ENCODE measurements at regions of chr19 and their contacts with region 1.

Region 1: DNA sequence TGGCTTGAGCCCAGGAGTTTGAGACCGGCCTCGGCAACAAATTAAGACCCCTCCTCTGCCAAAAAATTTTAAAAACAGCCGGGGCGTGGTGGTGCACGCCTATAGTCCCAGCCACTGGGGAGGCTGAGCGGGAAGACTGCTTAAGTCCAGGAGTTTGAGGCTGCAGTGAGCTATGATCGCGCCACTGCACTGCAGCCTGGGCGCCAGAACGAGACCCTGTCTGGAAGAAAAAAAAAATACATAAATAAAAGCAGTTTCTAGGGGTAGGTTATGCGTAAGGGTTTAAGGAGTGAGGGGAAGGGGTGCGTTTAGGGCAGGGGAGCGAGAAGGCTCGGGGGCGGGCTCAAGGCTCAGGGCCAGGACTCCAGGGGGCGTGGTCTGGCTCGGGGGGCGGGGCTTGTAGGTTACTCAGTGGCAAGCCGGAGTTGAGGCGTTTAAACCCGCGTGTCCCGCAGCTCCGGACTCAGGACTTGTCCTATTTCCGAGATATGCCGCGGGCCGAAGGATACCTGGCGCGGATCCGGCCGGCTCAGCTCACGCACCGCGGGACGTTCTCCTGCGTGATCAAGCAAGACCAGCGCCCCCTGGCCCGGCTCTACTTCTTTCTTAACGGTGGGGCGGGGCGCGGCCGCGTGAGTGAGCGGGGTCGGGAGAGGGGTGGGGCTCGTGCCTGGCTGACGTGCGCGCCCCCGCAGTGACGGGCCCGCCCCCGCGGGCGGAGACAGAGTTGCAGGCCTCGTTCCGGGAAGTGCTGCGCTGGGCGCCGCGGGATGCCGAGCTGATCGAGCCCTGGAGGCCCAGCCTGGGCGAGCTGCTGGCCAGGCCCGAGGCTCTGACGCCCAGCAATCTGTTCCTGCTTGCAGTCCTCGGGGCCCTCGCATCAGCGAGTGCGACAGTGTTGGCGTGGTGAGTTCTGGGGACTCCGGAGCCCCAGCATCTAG is 10.7 kb downstream of the SPACA6 start:
- DNase-seq: peak; percentile 97
- H3K4me3 Mint-ChIP-seq: peak overlapping the region; percentile 91
- H3K27ac Mint-ChIP-seq: peak overlapping the region; percentile 92
- H3K4me1 Mint-ChIP-seq: peaks cover 27% of the 10 kb centered on the region
- H3K27me3 Mint-ChIP-seq: peaks cover 3% of the 10 kb centered on the region

Region 2: DNA sequence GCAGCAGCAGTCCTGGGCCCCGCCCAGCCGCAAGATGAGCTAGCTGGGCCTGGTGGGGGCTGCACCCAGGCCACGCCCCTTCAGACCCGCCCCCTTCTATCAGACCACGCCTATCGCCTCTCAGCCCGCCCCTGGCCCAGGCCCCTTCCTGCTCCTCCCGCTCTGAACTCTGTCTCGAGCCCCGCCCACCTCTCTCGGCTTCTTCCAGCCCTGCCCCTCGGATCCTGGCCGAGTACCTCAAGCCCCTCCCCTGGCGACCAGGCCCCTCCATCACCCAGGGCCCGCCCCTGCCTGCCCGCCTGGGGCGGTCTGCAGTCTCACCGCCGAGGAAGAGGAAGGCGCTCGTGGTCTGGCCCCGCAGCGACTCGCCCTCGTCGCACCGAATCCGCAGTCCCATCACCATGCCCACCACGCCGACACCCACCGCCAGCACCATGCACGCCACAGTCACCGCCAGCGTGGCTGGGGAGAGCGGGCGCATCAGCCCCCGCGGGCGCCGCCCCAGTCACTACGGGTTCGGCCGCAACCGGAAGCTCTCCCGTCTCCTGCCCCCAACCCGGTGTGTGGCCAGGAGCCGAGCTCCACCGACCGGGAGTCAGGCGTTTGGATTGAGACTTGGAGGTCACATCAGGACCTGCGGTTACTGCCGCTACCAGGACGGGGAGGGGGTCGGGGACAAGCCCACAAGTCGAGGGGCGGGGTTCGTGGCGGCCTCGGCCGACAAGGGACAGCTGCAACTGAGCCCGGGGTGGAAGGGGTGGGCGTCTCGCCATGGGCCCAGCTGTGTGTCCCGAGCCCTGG is 336.1 kb before region 1 on chr19:
- CTCF ChIA-PET with region 1: no interaction called
- intact Hi-C with region 1: loop called (anchors 1 kb)
- DNase-seq: peak; percentile 99
- H3K4me3 Mint-ChIP-seq: peak overlapping the region; percentile 94
- H3K27ac Mint-ChIP-seq: peak overlapping the region; percentile 95
- H3K4me1 Mint-ChIP-seq: peaks cover 58% of the 10 kb centered on the region
- H3K27me3 Mint-ChIP-seq: no peaks in the 10 kb centered on the region

Region 3: GRCh38 chr19:51690454-51691073 is 13.3 kb before region 1 on chr19:
- CTCF ChIA-PET with region 1: no interaction called
- intact Hi-C with region 1: loop called (anchors 1 kb)
- DNase-seq: peak; percentile 88
- H3K4me3 Mint-ChIP-seq: peak overlapping the region; percentile 90
- H3K27ac Mint-ChIP-seq: peak overlapping the region; percentile 92
- H3K4me1 Mint-ChIP-seq: peaks cover 12% of the 10 kb centered on the region
- H3K27me3 Mint-ChIP-seq: no peaks in the 10 kb centered on the region

Region 4: GRCh38 chr19:51784922-51785690 is 81.3 kb after region 1 on chr19:
- CTCF ChIA-PET with region 1: no interaction called
- intact Hi-C with region 1: loop called (anchors 2 kb)
- DNase-seq: peak; percentile 85
- H3K4me3 Mint-ChIP-seq: no peak overlapping the region
- H3K27ac Mint-ChIP-seq: no peak overlapping the region
- H3K4me1 Mint-ChIP-seq: no peaks in the 10 kb centered on the region
- H3K27me3 Mint-ChIP-seq: peaks cover 13% of the 10 kb centered on the region

Measured in activated naive CD4-positive, alpha-beta T cell treated with anti-CD3 and anti-CD28 coated beads for 36 hours (primary cell).